ENCODE measurements at regions of chr7 and their contacts with region 1.

Region 1: DNA sequence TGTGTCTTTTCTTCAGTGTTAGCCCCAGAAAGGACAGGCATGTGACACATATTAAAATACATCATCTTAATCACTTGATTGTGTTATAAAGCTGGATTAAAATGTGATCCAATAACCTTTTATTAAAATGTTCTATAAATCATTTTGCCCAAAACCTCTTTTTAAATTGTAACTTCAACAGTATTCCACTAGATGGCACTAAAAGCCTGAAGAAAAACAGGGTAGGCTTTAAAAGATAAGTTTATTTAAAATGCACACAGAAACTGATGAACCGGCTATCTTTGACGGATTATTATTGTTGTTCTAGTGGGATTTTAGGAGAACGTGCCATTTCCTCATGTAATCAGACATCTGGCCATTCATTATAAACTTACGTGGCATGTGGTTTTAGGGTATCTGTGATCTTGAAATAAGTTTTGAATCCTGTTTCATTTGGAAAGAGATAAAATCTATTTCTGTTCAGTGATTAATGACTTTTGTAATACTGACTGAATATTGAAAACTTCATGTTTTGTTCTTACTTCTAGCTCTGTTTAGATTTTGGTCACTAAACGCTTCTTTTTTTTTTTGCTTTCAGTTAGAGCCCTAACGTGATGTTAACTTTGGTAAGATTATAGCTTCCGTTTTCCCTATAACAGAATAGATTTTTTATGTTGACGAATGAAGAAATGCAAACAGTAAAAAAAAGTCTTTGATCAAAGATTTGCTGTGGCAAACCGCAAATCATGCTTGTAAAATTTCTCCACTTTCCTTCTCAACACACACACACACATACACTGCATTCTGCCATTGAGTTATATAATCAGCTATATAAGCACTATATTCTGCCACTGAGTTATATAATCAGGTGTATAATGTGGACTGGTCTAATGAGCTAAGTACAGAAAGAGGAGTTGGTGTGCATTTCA is 13.6 kb downstream of the VPS50 start:
- DNase-seq: no peak
- CTCF ChIP-seq: peak; percentile 44

Region 2: DNA sequence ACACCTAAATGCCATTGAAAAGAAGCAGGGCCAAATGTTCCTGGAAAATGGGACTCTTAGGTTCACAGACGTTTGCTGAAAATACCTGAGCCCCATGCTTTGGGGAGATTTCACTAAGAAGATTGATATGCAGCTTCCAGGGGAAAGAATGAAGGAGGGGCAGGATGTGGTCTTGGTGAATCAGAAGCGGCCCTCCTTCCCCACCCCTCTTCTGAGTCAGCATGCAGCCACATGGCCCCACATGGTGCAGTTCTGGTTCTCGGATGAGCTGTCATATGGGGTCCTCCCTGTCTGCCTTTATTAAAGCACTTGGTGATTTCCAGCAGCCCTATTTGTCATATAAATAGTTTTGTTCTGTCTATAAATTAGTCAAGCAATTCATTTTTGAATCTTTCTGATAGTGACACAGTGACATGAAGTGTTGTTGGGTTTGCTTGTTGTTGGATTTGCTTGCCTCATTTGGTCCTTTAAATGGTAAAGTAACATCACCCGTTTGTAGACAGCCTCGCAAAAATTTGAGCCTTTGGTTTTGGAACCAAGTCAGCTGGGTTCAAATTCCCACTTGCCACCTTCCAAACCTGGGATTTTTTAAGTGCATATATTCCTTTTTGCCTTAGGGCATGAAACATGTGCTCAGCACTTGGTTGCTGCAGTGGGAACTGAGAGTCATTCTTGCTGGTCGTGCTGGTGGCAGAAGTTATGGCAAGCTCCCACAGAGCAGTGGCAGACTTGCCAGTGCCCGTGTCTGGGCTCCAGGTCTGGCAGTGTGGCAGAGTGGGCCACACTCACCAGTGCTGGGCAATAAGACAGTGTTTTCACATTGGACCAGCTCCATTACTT is 341.3 kb before region 1 on chr7:
- CTCF ChIA-PET with region 1: no interaction called
- POLR2A ChIA-PET with region 1: no interaction called
- DNase-seq: peak; percentile 61
- CTCF ChIP-seq: no peak

Region 3: DNA sequence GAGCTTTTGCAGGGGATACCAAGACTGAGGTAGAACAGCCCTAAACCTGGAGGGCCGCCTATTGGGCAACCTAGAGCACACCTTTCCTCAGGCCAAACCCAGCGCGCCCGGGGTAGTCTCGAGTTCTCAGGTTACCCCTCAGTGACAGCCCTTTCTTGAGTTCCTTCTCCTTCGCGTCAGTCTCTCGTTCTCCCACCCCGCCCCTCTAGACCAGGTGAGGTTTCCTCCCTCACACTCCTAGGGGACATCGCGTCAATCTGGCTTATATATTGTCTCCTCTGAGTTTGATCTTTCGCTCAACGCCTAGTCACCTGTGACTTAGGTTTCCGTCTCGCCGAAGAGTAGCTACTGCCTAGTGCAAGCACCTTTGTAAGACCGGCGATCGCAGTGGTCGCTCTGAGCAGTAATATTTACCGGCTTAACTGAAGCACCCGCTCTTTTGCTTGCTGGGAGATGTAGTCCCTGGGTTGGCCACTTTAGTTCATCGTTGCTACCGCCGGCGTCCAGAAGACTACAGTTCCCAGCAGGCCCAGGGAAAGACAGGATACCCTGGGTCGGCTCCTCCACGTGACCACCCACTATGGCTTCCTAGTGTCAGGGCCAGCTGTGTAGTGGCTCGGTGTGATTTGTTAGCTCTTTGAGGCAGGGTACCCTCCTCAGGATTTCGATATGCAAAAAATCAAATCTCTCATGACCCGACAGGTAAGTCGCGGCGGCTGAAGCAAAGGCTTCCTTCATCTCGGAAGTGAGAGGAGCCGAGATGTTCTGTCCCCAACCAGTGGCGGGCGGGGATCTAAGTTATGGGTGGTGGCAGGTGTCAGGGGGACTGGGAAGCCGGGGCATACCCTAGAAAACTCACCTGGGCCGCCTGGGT is 13.7 kb before region 1 on chr7 and contains the start of gene VPS50:
- CTCF ChIA-PET with region 1: interaction called, 40 read pairs
- POLR2A ChIA-PET with region 1: no interaction called
- DNase-seq: peak; percentile 91
- CTCF ChIP-seq: no peak

Region 4: GRCh38 chr7:93551063-93551904 is 305.5 kb after region 1 on chr7:
- CTCF ChIA-PET with region 1: interaction called, 56 read pairs
- POLR2A ChIA-PET with region 1: no interaction called
- DNase-seq: peak; percentile 3
- CTCF ChIP-seq: peak; percentile 53

Region 5: GRCh38 chr7:93941945-93942344 is 696.2 kb after region 1 on chr7:
- CTCF ChIA-PET with region 1: no interaction called
- POLR2A ChIA-PET with region 1: no interaction called
- DNase-seq: no peak
- CTCF ChIP-seq: no peak